Esophagus muscularis mucosa (tissue), 4 donors: ENCODE measurements at regions of chr12 and their contacts with region 1.

Region 1: DNA sequence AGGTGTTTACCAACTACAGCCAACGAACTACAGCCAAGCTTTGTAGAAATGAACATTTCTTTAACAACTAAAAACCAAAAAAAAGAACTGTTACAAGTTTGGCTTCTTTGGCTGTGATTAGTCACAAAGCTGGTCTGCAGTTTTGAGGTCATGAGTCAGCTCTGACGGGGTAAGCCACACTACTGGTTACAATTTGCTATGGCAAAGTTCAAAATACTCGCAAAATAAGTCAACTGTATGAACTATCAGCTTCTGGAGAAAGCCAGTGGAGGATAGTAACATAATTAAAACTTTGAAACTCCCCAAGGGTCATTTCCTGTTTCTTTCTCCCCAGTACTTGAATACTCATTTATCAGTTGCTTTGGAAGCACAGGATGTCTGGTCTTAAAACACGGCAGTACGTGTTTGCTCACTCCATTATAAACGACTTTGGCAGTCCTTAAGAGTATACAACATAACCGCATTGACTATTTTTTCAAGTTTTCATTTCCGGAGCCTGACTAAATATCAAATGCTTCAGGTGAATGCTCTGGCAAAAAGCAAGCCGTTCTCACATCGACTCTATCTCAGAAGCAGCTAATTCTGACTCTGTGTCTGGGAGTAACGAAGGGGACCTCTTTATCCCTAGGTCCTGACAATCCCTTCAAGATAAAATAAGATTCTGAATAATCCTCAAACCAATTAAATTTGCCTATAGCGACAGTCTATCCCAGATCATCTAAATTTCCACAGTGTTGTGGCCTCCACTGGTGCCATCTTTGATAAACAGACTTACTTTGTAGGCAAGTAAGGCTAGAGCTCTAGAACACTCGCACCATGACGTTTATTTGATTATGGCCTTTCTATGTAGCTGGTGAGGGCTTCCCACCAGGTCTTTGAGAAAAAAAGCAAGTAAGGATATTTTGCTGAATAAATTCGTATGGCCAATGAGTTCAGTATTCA is 10.6 kb downstream of the PHLDA1 start:
- DNase-seq: no peak
- H3K4me3 ChIP-seq: no peak overlapping the region
- H3K27ac ChIP-seq: peak overlapping the region; percentile 38 to 54 (median 48)
- H3K4me1 ChIP-seq: peaks cover 0 to 15% (median 10%) of the 10 kb centered on the region in 4 donors
- H3K27me3 ChIP-seq: no peaks in the 10 kb centered on the region
- CTCF ChIP-seq: no peak
- EP300 ChIP-seq: no peak
- POLR2A ChIP-seq: no peak

Region 2: DNA sequence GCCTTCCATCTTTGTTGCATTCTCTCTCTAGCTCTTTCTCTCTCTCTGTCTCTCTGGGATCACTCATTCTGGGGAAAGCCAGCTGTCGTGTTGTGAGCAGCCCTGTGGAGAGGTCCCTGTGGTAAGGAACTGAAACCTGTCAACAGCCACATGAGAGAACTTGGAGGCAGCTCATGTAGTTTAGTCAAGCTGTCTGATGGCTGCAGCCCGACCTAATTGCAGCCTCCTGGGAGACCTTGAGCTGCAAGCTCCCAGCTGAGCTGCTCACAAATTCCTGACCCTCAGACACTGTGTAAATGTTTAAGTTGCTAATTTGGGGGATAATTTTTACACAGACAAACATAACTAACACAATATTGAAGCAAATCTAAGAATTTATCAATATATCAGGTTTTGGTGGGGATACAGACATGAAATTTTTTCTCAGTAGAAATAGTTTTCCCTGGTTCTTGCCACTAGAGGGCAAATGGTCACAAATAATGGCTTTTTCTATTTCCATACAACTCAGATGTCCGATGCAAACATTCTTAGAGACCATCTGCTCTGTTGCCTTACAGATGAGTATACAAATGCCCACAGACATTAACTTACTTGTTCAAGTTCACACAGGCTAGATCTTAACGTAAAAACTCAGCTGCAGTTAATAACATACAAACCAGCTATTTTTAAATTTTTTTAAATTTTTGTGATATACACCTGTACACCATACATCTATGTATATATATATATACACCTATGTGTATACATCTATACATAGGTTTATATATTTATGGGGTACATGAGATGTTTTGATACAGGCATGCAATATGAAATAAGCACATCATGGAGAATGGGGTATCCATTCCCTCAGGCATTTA is 494.1 kb before region 1 on chr12:
- intact Hi-C with region 1: no loop called
- DNase-seq: no peak
- H3K4me3 ChIP-seq: no peak overlapping the region
- H3K27ac ChIP-seq: no peak overlapping the region
- H3K4me1 ChIP-seq: peaks cover 0 to 3% (median 0%) of the 10 kb centered on the region in 4 donors
- H3K27me3 ChIP-seq: no peaks in the 10 kb centered on the region
- CTCF ChIP-seq: peak; percentile 67 to 68 (median 68)
- EP300 ChIP-seq: no peak
- POLR2A ChIP-seq: no peak

Region 3: DNA sequence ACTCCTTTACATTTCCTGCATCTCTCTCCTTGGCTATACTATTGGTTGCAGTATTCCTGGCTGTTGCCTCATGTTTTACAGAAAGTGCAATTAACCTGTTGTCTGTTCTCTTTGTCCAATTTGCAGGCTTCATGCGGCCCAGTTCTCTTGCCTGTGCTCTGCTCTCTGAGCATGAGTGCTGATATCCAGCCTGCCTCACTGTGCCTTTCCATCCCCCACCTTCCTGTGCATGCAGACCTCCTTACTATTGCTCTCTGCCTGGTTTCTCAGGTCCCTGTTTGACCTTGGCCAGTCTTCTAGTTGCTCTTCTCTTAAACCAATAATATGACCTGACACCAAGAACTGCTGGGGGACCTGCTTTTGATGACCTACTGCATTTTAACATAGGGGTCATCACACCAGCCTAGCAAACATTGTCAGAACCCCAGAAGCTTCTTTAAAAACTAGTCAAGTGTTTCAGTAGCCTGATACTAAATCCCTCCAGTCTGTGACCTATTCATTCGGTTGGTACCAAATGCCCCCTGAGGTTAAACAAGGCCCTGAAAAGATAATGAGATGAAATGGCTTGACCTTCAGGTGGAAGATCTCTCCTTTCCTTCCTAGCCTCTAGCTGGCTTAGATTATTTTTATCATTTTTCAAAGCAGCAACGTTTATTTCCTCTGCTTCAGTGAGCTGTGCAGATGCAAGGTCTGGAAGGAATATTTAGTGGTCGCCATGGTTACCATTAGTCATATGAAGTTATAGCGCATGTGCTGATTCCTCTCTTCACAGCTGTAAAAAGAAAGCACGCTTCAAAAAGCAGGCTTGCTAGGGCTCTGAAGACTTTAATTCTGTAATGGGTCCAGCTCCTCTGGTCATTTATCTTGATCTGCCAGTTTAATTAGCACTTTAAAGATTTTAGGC is 205.9 kb before region 1 on chr12:
- intact Hi-C with region 1: loop called (anchors 10 kb)
- DNase-seq: no peak
- H3K4me3 ChIP-seq: no peak overlapping the region
- H3K27ac ChIP-seq: peak overlapping the region; percentile 63 to 68 (median 67)
- H3K4me1 ChIP-seq: peaks cover 10 to 26% (median 21%) of the 10 kb centered on the region in 4 donors
- H3K27me3 ChIP-seq: no peaks in the 10 kb centered on the region
- CTCF ChIP-seq: no peak
- EP300 ChIP-seq: no peak
- POLR2A ChIP-seq: no peak